Activated CD4-positive, alpha-beta T cell treated with anti-CD3 and anti-CD28 coated beads, Interleukin-2, amount 10 ng/mL, durations not matched to agents 24 days and 14 days (primary cell): ENCODE measurements at regions of chr17 and their contacts with region 1.

Region 1: GRCh38 chr17:46089389-46089965 is 90.4 kb downstream of the STH start:
- DNase-seq: no peak
- H3K4me3 Mint-ChIP-seq: peak overlapping the region; percentile 10
- H3K27ac Mint-ChIP-seq: peak overlapping the region; percentile 49
- H3K4me1 Mint-ChIP-seq: peaks cover 27% of the 10 kb centered on the region
- H3K27me3 Mint-ChIP-seq: no peaks in the 10 kb centered on the region

Region 2: GRCh38 chr17:46056800-46057304 is 32.6 kb before region 1 on chr17:
- intact Hi-C with region 1: loop called (anchors 5 kb)
- DNase-seq: no peak
- H3K4me3 Mint-ChIP-seq: no peak overlapping the region
- H3K27ac Mint-ChIP-seq: no peak overlapping the region
- H3K4me1 Mint-ChIP-seq: peaks cover 25% of the 10 kb centered on the region
- H3K27me3 Mint-ChIP-seq: no peaks in the 10 kb centered on the region